CD8-positive, alpha-beta memory T cell (primary cell): ENCODE measurements at regions of chr21 and their contacts with region 1.

Region 1: DNA sequence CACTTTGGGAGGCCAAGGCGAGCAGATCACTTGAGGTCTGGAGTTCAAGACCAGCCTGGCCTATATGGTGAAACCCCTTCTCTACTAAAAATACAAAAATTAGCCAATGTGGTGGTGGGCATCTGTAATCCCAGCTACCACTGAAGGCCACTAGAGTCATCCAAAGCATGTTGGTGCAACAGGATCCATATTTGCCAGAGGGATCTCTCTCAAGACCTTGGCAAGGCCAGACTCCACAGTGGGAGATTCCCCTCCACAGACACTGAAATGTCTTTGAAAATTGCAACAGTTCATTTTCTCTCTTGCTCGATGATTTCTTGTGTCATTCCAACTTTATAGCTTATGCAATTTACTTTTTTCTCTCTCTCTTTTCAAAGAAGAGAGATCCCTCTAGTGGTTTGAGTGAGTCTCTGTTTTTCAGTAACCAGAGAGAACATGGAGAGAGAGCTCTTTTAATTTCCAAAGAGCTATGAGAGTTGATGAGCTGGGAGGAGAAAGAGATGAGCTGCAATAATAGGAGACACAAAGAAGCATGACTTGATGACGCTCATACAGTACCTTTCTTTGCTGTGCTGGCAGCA is 176.8 kb upstream of the USP25 start:
- DNase-seq: peak in 2 of 5 donors; percentile 12 to 27
- H3K4me3 ChIP-seq: no peak overlapping the region
- H3K4me3 Mint-ChIP-seq: no peak overlapping the region
- H3K27ac ChIP-seq: no peak overlapping the region
- H3K27ac Mint-ChIP-seq: no peak overlapping the region
- H3K4me1 ChIP-seq: no peaks in the 10 kb centered on the region
- H3K4me1 Mint-ChIP-seq: peaks cover 2 to 10% (median 10%) of the 10 kb centered on the region in 3 donors
- H3K27me3 ChIP-seq: no peaks in the 10 kb centered on the region
- H3K27me3 Mint-ChIP-seq: peaks cover 0 to 2% of the 10 kb centered on the region in 2 donors

Region 2: GRCh38 chr21:15483138-15483780 is 69.7 kb before region 1 on chr21:
- CTCF ChIA-PET with region 1: interaction called, 19 read pairs
- POLR2A ChIA-PET with region 1: no interaction called
- DNase-seq: peak; percentile 63 to 82 (median 65)
- H3K4me3 ChIP-seq: no peak overlapping the region
- H3K4me3 Mint-ChIP-seq: peak overlapping the region in 1 of 7 donors; percentile 2
- H3K27ac ChIP-seq: no peak overlapping the region
- H3K27ac Mint-ChIP-seq: no peak overlapping the region
- H3K4me1 ChIP-seq: no peaks in the 10 kb centered on the region
- H3K4me1 Mint-ChIP-seq: peaks cover 7 to 25% (median 12%) of the 10 kb centered on the region in 3 donors
- H3K27me3 ChIP-seq: no peaks in the 10 kb centered on the region
- H3K27me3 Mint-ChIP-seq: no peaks in the 10 kb centered on the region